ENCODE measurements at regions of chr3 and their contacts with region 1.

Region 1: GRCh38 chr3:156674046-156674910 is at the start of gene TIPARP:
- DNase-seq: peak; percentile 100
- ATAC-seq: peak; percentile 80
- H3K4me3 Mint-ChIP-seq: peak within 1 kb of the TSS; percentile 92
- H3K27ac Mint-ChIP-seq: peak within 1 kb of the TSS; percentile 96
- H3K4me1 Mint-ChIP-seq: peaks cover 42% of the 10 kb centered on the region
- H3K27me3 Mint-ChIP-seq: no peaks in the 10 kb centered on the region
- total RNA-seq, gene TIPARP: 50.9 to 59.9 TPM

Region 2: GRCh38 chr3:156554842-156555687 is 119.2 kb before region 1 on chr3 and contains the start of gene SSR3:
- POLR2A ChIA-PET with region 1: interaction called, 37 read pairs
- DNase-seq: peak; percentile 98
- ATAC-seq: peak; percentile 100
- H3K4me3 Mint-ChIP-seq: peak within 1 kb of the TSS; percentile 93
- H3K27ac Mint-ChIP-seq: peak within 1 kb of the TSS; percentile 89
- H3K4me1 Mint-ChIP-seq: peaks cover 32% of the 10 kb centered on the region
- H3K27me3 Mint-ChIP-seq: no peaks in the 10 kb centered on the region
- total RNA-seq, gene SSR3: 113 to 118 TPM

Region 3: GRCh38 chr3:156643729-156644389 is 30.4 kb before region 1 on chr3:
- POLR2A ChIA-PET with region 1: interaction called, 19 read pairs
- DNase-seq: peak; percentile 62
- ATAC-seq: peak; percentile 89
- H3K4me3 Mint-ChIP-seq: peak overlapping the region; percentile 73
- H3K27ac Mint-ChIP-seq: peak overlapping the region; percentile 89
- H3K4me1 Mint-ChIP-seq: peaks cover 22% of the 10 kb centered on the region
- H3K27me3 Mint-ChIP-seq: no peaks in the 10 kb centered on the region

Region 4: DNA sequence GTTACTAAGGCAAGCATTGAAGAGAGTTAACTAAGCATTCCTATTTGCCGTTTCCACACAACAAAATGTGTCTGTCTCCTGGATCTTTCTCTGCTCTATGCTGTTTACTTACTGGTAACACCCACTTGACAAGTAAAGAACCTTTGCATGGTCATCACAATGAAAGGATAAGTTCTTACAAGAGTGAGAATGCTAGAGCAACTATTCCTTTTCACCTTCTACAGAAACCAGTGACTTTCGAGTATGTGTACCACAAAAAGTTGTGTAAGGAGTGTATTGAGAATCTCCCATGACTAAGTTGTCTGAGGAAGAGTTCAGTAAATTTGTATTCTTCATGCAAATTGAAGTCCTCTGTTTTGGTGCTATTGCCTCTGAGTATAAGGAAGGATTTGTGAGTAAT is 10.9 kb after region 1 on chr3:
- POLR2A ChIA-PET with region 1: interaction called, 13 read pairs
- DNase-seq: no peak
- ATAC-seq: no peak
- H3K4me3 Mint-ChIP-seq: peak overlapping the region; percentile 75
- H3K27ac Mint-ChIP-seq: peak overlapping the region; percentile 59
- H3K4me1 Mint-ChIP-seq: peaks cover 65% of the 10 kb centered on the region
- H3K27me3 Mint-ChIP-seq: no peaks in the 10 kb centered on the region

Region 5: GRCh38 chr3:157088601-157089454 is 414.6 kb after region 1 on chr3:
- POLR2A ChIA-PET with region 1: interaction called, 20 read pairs
- DNase-seq: peak; percentile 97
- ATAC-seq: peak; percentile 96
- H3K4me3 Mint-ChIP-seq: peak overlapping the region; percentile 88
- H3K27ac Mint-ChIP-seq: peak overlapping the region; percentile 93
- H3K4me1 Mint-ChIP-seq: peaks cover 40% of the 10 kb centered on the region
- H3K27me3 Mint-ChIP-seq: no peaks in the 10 kb centered on the region

Region 6: DNA sequence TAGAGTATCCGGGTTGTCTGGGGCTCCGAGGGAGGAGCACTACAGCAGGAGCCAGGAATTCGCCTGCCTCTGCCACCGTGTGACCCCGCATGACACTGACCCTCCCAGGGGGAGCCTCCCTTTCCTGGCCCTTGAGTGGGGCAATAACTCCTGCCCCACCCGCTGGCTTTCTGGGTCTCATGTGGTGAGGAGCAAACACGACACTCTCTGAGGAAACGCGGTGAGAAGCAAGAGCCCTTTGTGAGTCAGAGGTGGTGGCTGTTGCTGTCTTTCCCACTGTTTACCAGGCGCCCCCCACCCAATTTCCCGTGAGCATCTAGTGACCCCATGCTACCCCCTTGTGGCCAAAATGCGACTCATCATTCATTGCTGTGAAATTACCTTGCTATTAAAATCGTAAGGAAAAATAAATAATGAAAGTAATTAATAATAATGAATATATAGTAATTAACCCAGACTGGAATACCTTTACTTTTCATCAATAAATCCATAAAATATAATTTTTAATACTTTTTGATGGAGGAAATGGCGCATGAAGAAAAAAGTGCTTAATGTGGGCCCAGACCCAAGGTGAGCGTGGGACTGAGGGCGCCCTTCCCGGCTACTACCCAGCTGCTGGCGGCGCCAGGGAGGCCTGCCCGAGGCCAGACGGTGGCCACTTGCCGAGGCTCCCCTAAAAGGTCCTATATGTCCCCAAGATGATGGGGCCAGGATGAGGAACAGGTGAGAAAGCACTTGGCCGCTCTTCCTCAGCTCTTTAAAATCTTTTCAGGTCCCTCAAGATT is 456.4 kb after region 1 on chr3:
- POLR2A ChIA-PET with region 1: interaction called, 20 read pairs
- DNase-seq: peak; percentile 66
- ATAC-seq: peak; percentile 41
- H3K4me3 Mint-ChIP-seq: peak overlapping the region; percentile 69
- H3K27ac Mint-ChIP-seq: peak overlapping the region; percentile 96
- H3K4me1 Mint-ChIP-seq: peaks cover 72% of the 10 kb centered on the region
- H3K27me3 Mint-ChIP-seq: no peaks in the 10 kb centered on the region

Measured in activated naive CD8-positive, alpha-beta T cell treated with anti-CD3 and anti-CD28 coated beads, Interleukin-2, amount 10 ng/mL, durations not matched to agents 7 days and 5 days (primary cell).